ENCODE measurements at regions of chr11 and their contacts with region 1.

Region 1: DNA sequence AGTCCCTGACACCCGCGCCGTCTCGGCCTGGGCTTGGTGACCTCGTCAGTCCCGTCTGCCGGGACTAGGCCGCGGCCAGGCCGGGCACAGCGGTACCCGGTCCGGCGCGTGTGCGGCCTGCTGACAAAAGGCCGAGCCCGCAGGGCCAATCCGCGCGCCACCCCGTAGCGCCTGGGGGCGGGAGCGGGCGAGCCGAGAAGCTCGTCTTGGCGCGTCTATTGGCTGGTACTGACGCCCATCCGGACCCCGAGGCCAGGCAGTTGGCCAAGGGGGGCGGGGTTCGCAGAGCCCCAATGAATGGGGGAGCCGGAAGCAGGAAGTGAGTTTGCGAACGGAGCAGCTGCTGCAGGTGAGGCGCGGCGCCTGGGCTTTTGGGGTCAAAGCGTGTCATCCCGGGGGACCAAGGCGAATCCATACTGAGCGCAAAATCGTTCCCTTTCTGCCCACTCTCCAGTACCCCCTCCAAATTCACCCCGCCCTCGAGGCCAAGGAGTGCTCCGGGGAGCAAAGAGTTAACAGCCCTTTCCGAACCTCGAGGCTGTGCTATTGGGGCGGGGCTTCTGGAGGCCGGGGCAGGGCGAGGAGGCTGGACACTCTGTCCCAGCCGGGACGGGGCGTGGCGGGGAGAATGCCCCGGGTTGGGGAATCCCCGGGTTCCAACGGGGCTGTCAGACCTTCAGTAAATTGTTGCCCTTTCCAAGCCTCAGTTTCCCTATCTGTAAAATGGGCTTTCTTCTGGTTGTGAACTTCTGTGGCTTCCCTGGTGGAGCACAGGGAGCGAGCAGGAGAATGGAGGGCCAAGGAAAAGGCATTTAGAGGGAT is at the start of gene DPP3:
- DNase-seq: peak; percentile 87 to 97 (median 95)
- ATAC-seq: peak; percentile 99
- H3K4me3 ChIP-seq: peak within 1 kb of the TSS; percentile 86
- H3K4me3 Mint-ChIP-seq: peak within 1 kb of the TSS; percentile 86 to 92 (median 90)
- H3K27ac ChIP-seq: peak within 1 kb of the TSS; percentile 90
- H3K27ac Mint-ChIP-seq: peak within 1 kb of the TSS; percentile 75 to 91 (median 90)
- H3K4me1 ChIP-seq: peaks cover 9 to 14% of the 10 kb centered on the region in 2 donors
- H3K4me1 Mint-ChIP-seq: peaks cover 9 to 37% (median 17%) of the 10 kb centered on the region in 7 donors
- H3K27me3 ChIP-seq: no peaks in the 10 kb centered on the region
- H3K27me3 Mint-ChIP-seq: no peaks in the 10 kb centered on the region
- total RNA-seq, gene DPP3: 15.8 to 75.7 (median 19.4) TPM

Region 2: DNA sequence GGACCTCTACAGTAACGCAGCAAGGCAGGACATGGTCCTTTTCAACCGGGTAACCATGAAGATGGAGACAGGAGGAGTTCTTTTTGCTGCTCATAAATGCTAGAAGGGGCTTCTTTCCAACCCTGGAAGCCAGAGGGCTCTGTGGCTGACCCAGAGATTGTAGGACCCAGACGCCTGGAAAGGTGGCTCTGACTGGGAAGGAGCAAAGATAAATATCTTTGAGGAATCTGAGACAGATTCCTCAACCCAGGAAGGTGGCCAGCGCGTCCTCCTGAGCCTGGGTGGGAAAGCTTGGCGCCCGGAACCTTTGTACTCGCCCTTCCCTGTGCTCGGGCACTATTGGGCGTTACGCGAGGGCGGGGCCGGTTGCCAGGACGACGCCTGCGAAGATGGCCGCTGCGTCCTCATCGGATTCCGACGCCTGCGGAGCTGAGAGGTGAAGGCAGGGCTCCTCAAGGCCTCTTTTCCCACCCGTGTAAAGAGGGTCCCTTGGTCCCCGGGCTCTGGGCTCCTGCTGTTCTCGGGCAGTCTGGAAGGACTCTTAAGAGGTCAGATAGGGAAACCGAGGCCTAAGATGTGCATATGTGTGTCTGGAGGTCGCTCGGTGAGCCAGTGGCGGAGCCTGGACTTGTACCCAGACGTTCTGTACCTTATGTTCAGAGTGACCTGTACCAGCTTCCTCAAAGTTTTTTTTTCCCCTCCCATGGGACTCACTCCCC is 30.1 kb after region 1 on chr11 and contains the start of gene BBS1:
- CTCF ChIA-PET with region 1: no interaction called
- POLR2A ChIA-PET with region 1: interaction called, 8 read pairs
- intact Hi-C with region 1: loop called in 1 of 2 experiments (anchors 1 kb)
- DNase-seq: peak; percentile 64 to 85 (median 78)
- ATAC-seq: peak; percentile 98
- H3K4me3 ChIP-seq: peak within 1 kb of the TSS; percentile 89
- H3K4me3 Mint-ChIP-seq: peak within 1 kb of the TSS; percentile 86 to 95 (median 90)
- H3K27ac ChIP-seq: peak within 1 kb of the TSS; percentile 65
- H3K27ac Mint-ChIP-seq: peak within 1 kb of the TSS; percentile 36 to 77 (median 67)
- H3K4me1 ChIP-seq: peaks cover 6 to 10% of the 10 kb centered on the region in 2 donors
- H3K4me1 Mint-ChIP-seq: peaks cover 9 to 24% (median 18%) of the 10 kb centered on the region in 7 donors
- H3K27me3 ChIP-seq: no peaks in the 10 kb centered on the region
- H3K27me3 Mint-ChIP-seq: no peaks in the 10 kb centered on the region
- total RNA-seq, gene BBS1: 16.9 to 38.2 (median 23.6) TPM